ENCODE measurements at regions of chr4 and their contacts with region 1.

Region 1: GRCh38 chr4:112031712-112032328 is 113.4 kb upstream of the FAM241A start:
- DNase-seq: no peak
- ATAC-seq: no peak
- H3K4me3 ChIP-seq: no peak overlapping the region
- H3K27ac ChIP-seq: no peak overlapping the region
- H3K4me1 ChIP-seq: no peaks in the 10 kb centered on the region
- H3K27me3 ChIP-seq: no peaks in the 10 kb centered on the region
- CTCF ChIP-seq: peak in 2 of 5 experiments; percentile 34 to 39
- POLR2A ChIP-seq: no peak

Region 2: GRCh38 chr4:111631215-111631999 is 400.4 kb before region 1 on chr4:
- in situ Hi-C with region 1: loop called in 1 of 4 experiments (anchors 25 kb)
- intact Hi-C with region 1: loop called (anchors 10 kb)
- DNase-seq: no peak
- ATAC-seq: no peak
- H3K4me3 ChIP-seq: no peak overlapping the region
- H3K27ac ChIP-seq: no peak overlapping the region
- H3K4me1 ChIP-seq: no peaks in the 10 kb centered on the region
- H3K27me3 ChIP-seq: no peaks in the 10 kb centered on the region
- CTCF ChIP-seq: no peak
- POLR2A ChIP-seq: no peak

Region 3: DNA sequence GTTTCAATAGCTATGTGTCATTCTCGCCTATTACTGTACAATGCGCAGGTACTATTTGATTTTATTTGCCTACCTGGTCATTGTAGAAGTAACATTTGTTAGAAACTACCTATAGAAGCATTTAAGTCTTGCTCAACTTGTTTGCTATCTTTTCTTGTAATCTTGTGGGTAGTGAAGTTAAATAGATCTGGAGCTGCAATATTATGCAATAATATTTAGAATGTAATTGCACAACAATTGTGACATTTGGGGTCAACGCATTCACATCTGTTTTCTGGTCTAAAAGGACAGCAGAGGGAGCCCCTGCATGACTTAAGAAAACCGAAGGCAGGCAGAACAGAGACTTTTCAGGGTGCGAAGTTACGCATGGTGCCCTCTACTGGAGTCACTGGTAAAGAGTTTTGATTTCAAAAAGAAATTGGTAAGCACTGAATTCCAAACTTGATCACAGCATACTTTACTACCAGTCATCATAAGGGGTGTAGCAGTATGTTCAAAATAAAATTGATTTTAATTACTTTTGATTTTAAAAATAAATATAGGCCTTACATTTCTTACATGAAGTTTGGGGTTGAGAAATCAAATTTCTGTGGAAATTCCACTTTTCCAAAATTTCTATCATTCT is 389.8 kb before region 1 on chr4:
- in situ Hi-C with region 1: loop called in 1 of 4 experiments (anchors 25 kb)
- intact Hi-C with region 1: loop called (anchors 10 kb)
- DNase-seq: peak in 1 of 2 donors; percentile 22
- ATAC-seq: peak in 1 of 2 donors; percentile 63
- H3K4me3 ChIP-seq: no peak overlapping the region
- H3K27ac ChIP-seq: no peak overlapping the region
- H3K4me1 ChIP-seq: no peaks in the 10 kb centered on the region
- H3K27me3 ChIP-seq: no peaks in the 10 kb centered on the region
- CTCF ChIP-seq: peak in 4 of 5 experiments; percentile 21 to 52 (median 39)
- POLR2A ChIP-seq: no peak

Region 4: DNA sequence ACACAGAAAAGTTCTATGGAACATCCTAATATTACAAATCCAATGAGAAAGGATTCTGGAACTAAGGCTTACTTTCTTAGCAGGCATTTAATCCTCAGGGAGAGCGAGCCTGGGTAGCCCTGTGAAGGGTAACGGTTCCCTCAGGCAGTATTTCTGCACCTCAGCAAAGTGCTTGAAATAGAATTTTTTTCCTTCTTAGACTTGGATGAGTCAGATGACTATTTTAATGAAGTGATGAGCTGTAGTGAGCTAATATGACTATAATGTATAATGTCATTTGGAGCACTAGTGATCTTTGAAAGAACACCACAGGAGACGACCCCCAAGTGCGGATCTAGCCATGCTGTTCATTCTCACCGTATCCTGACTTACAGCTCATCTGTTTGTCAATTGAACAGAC is 379.6 kb before region 1 on chr4:
- in situ Hi-C with region 1: loop called in 2 of 4 experiments (anchors 25 kb)
- intact Hi-C with region 1: no loop called
- DNase-seq: no peak
- ATAC-seq: no peak
- H3K4me3 ChIP-seq: no peak overlapping the region
- H3K27ac ChIP-seq: no peak overlapping the region
- H3K4me1 ChIP-seq: no peaks in the 10 kb centered on the region
- H3K27me3 ChIP-seq: no peaks in the 10 kb centered on the region
- CTCF ChIP-seq: no peak
- POLR2A ChIP-seq: no peak

Measured in gastrocnemius medialis (tissue), 4 donors.